CD8-positive, alpha-beta T cell (primary cell): ENCODE measurements at regions of chr6 and their contacts with region 1.

Region 1: DNA sequence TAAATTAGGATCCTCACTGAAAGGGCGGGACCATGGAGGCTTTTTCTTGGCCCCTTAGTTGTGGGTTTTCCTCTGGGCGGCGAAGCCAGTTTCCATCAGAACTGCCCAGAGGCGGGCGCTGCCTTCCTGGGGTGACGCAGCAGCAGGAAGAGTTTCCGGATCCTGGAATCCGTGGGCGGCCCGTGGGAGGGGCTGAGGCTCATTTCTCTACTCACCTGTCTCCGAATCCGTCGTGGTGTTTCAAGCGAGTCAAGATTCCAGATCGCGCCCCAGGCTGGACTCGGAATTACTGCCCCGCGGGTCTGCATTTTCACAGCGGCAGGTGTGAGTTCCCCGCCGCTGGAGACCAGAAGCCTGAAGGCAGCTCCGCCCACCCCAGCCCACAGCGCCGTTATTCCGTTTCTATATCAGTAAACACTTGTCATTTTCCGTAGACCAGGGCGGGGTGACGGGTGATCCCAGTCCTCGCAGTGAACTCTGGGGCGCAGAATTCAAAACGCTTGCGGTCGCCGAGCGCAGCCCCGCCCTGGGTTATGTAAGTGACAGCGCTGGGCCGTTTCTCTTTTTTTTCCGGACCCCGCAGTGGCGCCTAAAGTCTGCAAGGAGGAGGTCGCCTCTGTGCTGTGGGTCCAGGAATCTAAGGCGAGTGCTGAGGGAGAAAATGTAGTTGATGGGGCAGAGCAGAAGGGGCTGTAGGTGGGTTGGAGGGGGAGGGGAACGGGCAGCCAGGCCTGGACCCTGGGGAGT is 27.2 kb upstream of the POU5F1 start:
- DNase-seq: peak; percentile 88 to 98 (median 93)
- ATAC-seq: peak; percentile 80
- H3K4me3 ChIP-seq: peak overlapping the region; percentile 79 to 80
- H3K4me3 Mint-ChIP-seq: peak overlapping the region; percentile 83
- H3K27ac ChIP-seq: peak overlapping the region; percentile 97 to 98
- H3K27ac Mint-ChIP-seq: peak overlapping the region; percentile 100
- H3K4me1 ChIP-seq: peaks cover 43% of the 10 kb centered on the region
- H3K4me1 Mint-ChIP-seq: peaks cover 62% of the 10 kb centered on the region
- H3K27me3 ChIP-seq: no peaks in the 10 kb centered on the region
- H3K27me3 Mint-ChIP-seq: no peaks in the 10 kb centered on the region
- CTCF ChIP-seq: no peak

Region 2: GRCh38 chr6:31128093-31128676 is 69.5 kb before region 1 on chr6:
- CTCF ChIA-PET with region 1: interaction called, 5 read pairs
- POLR2A ChIA-PET with region 1: no interaction called
- intact Hi-C with region 1: loop called in 1 of 2 experiments (anchors 2 kb)
- DNase-seq: peak; percentile 50 to 87 (median 74)
- ATAC-seq: peak; percentile 90
- H3K4me3 ChIP-seq: no peak overlapping the region
- H3K4me3 Mint-ChIP-seq: no peak overlapping the region
- H3K27ac ChIP-seq: no peak overlapping the region
- H3K27ac Mint-ChIP-seq: no peak overlapping the region
- H3K4me1 ChIP-seq: no peaks in the 10 kb centered on the region
- H3K4me1 Mint-ChIP-seq: peaks cover 8% of the 10 kb centered on the region
- H3K27me3 ChIP-seq: no peaks in the 10 kb centered on the region
- H3K27me3 Mint-ChIP-seq: peaks cover 6% of the 10 kb centered on the region
- CTCF ChIP-seq: peak; percentile 79

Region 3: DNA sequence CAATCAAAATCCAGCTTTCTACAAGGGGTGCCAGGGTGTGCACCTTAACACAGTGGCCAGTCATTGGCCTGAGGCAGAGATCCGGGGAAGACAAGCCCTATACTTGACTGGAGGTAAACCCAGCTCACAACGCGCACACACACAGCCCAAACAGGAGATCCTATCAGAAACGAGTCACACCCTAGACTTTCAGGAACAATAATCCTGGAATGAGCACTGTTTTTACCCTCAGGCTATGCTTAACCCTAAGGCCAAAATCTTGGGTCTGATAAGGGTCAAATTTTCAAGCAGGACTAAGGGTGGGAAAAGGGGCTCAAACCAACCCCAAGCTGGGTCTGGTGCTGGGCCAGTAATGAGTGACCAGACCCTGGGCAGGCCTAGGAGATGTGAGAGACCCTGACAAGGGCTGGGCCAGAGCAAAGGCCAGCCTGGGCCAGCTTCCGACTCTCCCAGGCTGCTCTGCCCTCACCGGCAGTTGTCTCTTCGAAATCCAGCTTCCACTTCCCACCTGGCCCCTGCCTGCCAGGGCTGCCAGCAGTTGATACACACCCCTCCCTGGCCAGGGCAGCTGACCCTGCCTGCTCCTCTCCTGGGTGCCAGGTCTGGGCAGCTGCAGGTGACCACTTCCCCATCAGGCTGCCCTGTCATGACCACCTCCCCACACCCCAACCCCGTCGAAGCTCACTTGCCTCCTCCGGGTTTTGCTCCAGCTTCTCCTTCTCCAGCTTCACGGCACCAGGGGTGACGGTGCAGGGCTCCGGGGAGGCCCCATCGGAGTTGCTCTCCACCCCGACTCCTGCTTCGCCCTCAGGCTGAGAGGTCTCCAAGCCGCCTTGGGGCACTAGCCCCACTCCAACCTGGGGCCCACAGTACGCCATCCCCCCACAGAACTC is 28.0 kb before region 1 on chr6:
- CTCF ChIA-PET with region 1: no interaction called
- POLR2A ChIA-PET with region 1: no interaction called
- intact Hi-C with region 1: no loop called
- DNase-seq: no peak
- ATAC-seq: no peak
- H3K4me3 ChIP-seq: no peak overlapping the region
- H3K4me3 Mint-ChIP-seq: no peak overlapping the region
- H3K27ac ChIP-seq: no peak overlapping the region
- H3K27ac Mint-ChIP-seq: no peak overlapping the region
- H3K4me1 ChIP-seq: no peaks in the 10 kb centered on the region
- H3K4me1 Mint-ChIP-seq: no peaks in the 10 kb centered on the region
- H3K27me3 ChIP-seq: no peaks in the 10 kb centered on the region
- H3K27me3 Mint-ChIP-seq: no peaks in the 10 kb centered on the region
- CTCF ChIP-seq: no peak

Region 4: GRCh38 chr6:31210123-31210522 is 12.4 kb after region 1 on chr6:
- CTCF ChIA-PET with region 1: interaction called, 4 read pairs
- POLR2A ChIA-PET with region 1: interaction called, 10 read pairs
- intact Hi-C with region 1: no loop called
- DNase-seq: no peak
- ATAC-seq: no peak
- H3K4me3 ChIP-seq: no peak overlapping the region
- H3K4me3 Mint-ChIP-seq: no peak overlapping the region
- H3K27ac ChIP-seq: no peak overlapping the region
- H3K27ac Mint-ChIP-seq: no peak overlapping the region
- H3K4me1 ChIP-seq: no peaks in the 10 kb centered on the region
- H3K4me1 Mint-ChIP-seq: peaks cover 5% of the 10 kb centered on the region
- H3K27me3 ChIP-seq: no peaks in the 10 kb centered on the region
- H3K27me3 Mint-ChIP-seq: no peaks in the 10 kb centered on the region
- CTCF ChIP-seq: no peak

Region 5: DNA sequence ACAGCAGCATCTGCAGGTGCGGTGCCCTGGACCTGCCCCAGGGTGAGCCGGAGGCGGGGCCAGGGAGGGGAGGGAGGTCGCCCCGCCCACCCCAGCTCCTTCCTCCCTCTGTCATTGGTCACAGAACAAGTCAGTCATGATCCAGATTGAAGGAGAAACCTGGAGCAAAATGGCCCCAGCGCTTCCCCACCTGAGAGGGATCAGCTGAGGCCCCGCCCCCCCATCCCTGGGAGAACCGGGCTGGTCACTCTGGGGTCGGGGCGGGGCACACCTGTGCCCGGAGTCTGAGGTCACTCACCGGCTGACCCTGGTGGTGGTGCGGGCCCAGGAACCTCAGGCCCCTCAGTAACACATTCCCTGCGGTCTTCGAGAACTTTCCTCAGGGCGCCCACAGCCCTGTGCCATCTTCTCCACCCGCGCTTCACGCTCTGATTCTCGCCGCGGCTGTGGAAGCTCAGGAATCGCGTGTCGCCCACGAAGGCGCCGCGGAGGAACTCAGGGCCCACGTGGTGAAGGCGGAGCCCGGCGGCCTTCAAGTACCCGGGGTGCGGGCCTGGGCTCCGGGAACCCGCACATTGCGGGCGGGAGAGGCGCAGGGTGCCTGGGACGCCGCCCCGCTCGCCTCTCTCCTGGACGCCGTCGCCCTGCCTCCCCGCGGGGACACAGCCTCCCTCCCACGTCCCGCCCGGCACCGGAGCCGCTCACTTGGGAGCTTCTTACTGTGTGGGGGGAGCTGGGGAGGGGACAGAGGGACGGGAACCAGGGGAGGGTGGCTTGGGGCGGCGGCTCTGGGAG is 110.5 kb after region 1 on chr6:
- CTCF ChIA-PET with region 1: interaction called, 4 read pairs
- POLR2A ChIA-PET with region 1: interaction called, 15 read pairs
- intact Hi-C with region 1: no loop called
- DNase-seq: peak; percentile 48 to 86 (median 69)
- ATAC-seq: peak; percentile 95
- H3K4me3 ChIP-seq: peak overlapping the region; percentile 64 to 74
- H3K4me3 Mint-ChIP-seq: peak overlapping the region; percentile 85
- H3K27ac ChIP-seq: peak overlapping the region in 1 of 2 experiments; percentile 27
- H3K27ac Mint-ChIP-seq: peak overlapping the region; percentile 77
- H3K4me1 ChIP-seq: peaks cover 9% of the 10 kb centered on the region
- H3K4me1 Mint-ChIP-seq: peaks cover 7% of the 10 kb centered on the region
- H3K27me3 ChIP-seq: no peaks in the 10 kb centered on the region
- H3K27me3 Mint-ChIP-seq: no peaks in the 10 kb centered on the region
- CTCF ChIP-seq: no peak

Region 6: DNA sequence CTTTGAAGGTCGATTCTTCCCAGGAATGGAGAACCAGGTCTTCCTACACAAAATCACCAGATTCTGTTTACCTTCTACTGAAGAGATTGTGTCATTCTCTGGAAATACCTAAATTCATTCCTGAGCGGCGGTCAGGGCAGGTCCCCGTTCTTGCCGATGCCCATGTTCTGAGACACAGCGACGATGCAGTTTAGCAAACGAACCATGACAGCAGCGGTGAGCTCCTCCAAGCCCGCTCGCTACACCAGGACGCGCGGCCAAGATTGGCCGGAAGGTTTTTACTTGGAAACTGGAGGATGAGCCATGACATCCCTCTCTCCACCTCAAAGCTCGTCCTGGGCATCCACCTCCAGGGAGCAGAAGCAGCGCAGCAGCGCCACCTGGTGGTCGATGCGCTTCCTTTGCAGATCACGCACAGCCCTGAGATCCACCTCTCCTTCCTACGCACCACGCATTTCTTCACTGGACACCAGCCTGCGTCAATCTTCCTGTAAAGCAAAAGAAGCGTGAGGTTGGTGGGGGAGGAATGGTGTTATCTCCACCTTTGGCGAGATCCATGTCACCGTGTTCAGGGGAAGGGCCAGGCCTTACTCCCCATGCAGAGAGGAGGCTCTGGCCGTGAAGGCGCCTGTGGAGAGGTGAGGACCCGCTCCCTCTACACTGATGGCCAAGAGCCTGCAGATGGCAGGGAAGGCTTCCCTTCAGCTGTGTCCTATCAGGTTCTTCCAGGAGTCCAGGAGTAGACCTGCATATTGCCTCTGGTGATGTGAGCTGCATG is 169.2 kb after region 1 on chr6:
- CTCF ChIA-PET with region 1: interaction called, 43 read pairs
- POLR2A ChIA-PET with region 1: interaction called, 55 read pairs
- intact Hi-C with region 1: loop called (anchors 1 kb)
- DNase-seq: peak; percentile 80 to 94 (median 90)
- ATAC-seq: peak; percentile 98
- H3K4me3 ChIP-seq: peak overlapping the region; percentile 54 to 57
- H3K4me3 Mint-ChIP-seq: peak overlapping the region; percentile 86
- H3K27ac ChIP-seq: peak overlapping the region in 1 of 2 experiments; percentile 31
- H3K27ac Mint-ChIP-seq: peak overlapping the region; percentile 82
- H3K4me1 ChIP-seq: peaks cover 3% of the 10 kb centered on the region
- H3K4me1 Mint-ChIP-seq: peaks cover 15% of the 10 kb centered on the region
- H3K27me3 ChIP-seq: no peaks in the 10 kb centered on the region
- H3K27me3 Mint-ChIP-seq: peaks cover 11% of the 10 kb centered on the region
- CTCF ChIP-seq: peak; percentile 94

Region 7: GRCh38 chr6:31619805-31620585 is 422.3 kb after region 1 on chr6:
- CTCF ChIA-PET with region 1: no interaction called
- POLR2A ChIA-PET with region 1: no interaction called
- intact Hi-C with region 1: loop called in 1 of 2 experiments (anchors 5 kb)
- DNase-seq: peak; percentile 94 to 99 (median 96)
- ATAC-seq: peak; percentile 80
- H3K4me3 ChIP-seq: peak overlapping the region; percentile 83 to 96
- H3K4me3 Mint-ChIP-seq: peak overlapping the region; percentile 91
- H3K27ac ChIP-seq: peak overlapping the region; percentile 95 to 99
- H3K27ac Mint-ChIP-seq: peak overlapping the region; percentile 96
- H3K4me1 ChIP-seq: peaks cover 37% of the 10 kb centered on the region
- H3K4me1 Mint-ChIP-seq: peaks cover 52% of the 10 kb centered on the region
- H3K27me3 ChIP-seq: no peaks in the 10 kb centered on the region
- H3K27me3 Mint-ChIP-seq: no peaks in the 10 kb centered on the region
- CTCF ChIP-seq: no peak